ENCODE measurements at regions of chr5 and their contacts with region 1.

Region 1: GRCh38 chr5:162139190-162139589 is 71.6 kb downstream of the GABRG2 start:
- DNase-seq: no peak
- H3K4me3 ChIP-seq: no peak overlapping the region
- H3K27ac ChIP-seq: no peak overlapping the region
- H3K4me1 ChIP-seq: no peaks in the 10 kb centered on the region
- H3K27me3 ChIP-seq: peaks cover 3% of the 10 kb centered on the region; the same call in 1 of the 2 replicates
- CTCF ChIP-seq: no peak

Region 2: GRCh38 chr5:160887777-160888176 is 1251.4 kb before region 1 on chr5:
- CTCF ChIA-PET with region 1: no interaction called
- POLR2A ChIA-PET with region 1: interaction called, 11 read pairs
- intact Hi-C with region 1: no loop called
- DNase-seq: peak in 1 of 2 experiments; percentile 54
- H3K4me3 ChIP-seq: no peak overlapping the region
- H3K27ac ChIP-seq: no peak overlapping the region
- H3K4me1 ChIP-seq: no peaks in the 10 kb centered on the region
- H3K27me3 ChIP-seq: no peaks in the 10 kb centered on the region
- CTCF ChIP-seq: no peak

Measured in PC-9 (cell line).